Ascending aorta (tissue), 2 donors: ENCODE measurements at regions of chr12 and their contacts with region 1.

Region 1: GRCh38 chr12:54579696-54580333 is 8.6 kb downstream of the PPP1R1A start:
- DNase-seq: peak; percentile 39 to 93
- H3K4me3 ChIP-seq: no peak overlapping the region
- H3K27ac ChIP-seq: peak overlapping the region; percentile 27 to 29
- H3K4me1 ChIP-seq: peaks cover 0 to 3% of the 10 kb centered on the region in 2 donors
- H3K27me3 ChIP-seq: no peaks in the 10 kb centered on the region
- CTCF ChIP-seq: peak; percentile 92 to 100 (median 99)

Region 2: GRCh38 chr12:54411391-54412241 is 168.2 kb before region 1 on chr12:
- intact Hi-C with region 1: no loop called
- DNase-seq: peak; percentile 77 to 91
- H3K4me3 ChIP-seq: peak overlapping the region; percentile 70 to 98
- H3K27ac ChIP-seq: peak overlapping the region; percentile 37 to 97
- H3K4me1 ChIP-seq: peaks cover 24 to 56% of the 10 kb centered on the region in 2 donors
- H3K27me3 ChIP-seq: no peaks in the 10 kb centered on the region
- CTCF ChIP-seq: no peak

Region 3: GRCh38 chr12:54526812-54527630 is 52.8 kb before region 1 on chr12:
- intact Hi-C with region 1: loop called (anchors 5 kb)
- DNase-seq: peak in 1 of 2 donors; percentile 67
- H3K4me3 ChIP-seq: no peak overlapping the region
- H3K27ac ChIP-seq: no peak overlapping the region
- H3K4me1 ChIP-seq: no peaks in the 10 kb centered on the region
- H3K27me3 ChIP-seq: no peaks in the 10 kb centered on the region
- CTCF ChIP-seq: peak; percentile 38 to 62 (median 51)

Region 4: GRCh38 chr12:54596526-54596946 is 16.7 kb after region 1 on chr12:
- intact Hi-C with region 1: loop called (anchors 2 kb)
- DNase-seq: peak in 1 of 2 donors; percentile 84
- H3K4me3 ChIP-seq: no peak overlapping the region
- H3K27ac ChIP-seq: no peak overlapping the region
- H3K4me1 ChIP-seq: no peaks in the 10 kb centered on the region
- H3K27me3 ChIP-seq: no peaks in the 10 kb centered on the region
- CTCF ChIP-seq: peak; percentile 44 to 86 (median 82)